WTC11 (cell line): ENCODE measurements at regions of chr18 and their contacts with region 1.

Region 1: DNA sequence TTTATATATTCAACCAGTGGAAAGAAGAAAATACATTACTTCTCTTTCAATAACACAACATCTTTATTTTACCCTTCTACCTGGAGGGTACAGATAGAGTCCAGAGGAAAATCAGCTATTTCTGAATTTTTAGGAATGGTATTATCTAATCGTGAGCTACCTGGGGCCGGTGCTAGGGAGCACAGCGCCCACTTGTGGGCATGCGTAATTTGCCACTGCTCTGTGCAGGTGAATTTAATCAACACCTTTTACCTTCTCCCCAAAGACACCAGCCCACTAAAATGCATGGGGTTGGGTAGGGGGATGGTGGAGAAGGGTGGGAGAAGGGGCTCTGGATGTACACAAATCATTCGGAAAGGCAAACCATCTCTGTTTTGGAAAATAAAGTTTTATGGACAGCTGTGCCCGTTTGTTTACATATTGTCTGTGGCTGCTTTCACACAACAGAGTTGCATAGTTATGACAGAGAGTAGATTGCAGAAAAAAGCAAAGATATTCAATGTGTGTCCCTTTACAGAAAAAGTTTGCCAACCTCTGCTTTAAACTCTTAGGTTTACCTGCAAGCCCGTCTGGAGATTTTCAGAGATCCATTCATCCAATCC is 51.5 kb upstream of the DCC start:
- DNase-seq: peak; percentile 75
- ATAC-seq: peak; percentile 93
- H3K4me3 Mint-ChIP-seq: no peak overlapping the region
- H3K27ac Mint-ChIP-seq: no peak overlapping the region
- H3K4me1 Mint-ChIP-seq: peaks cover 43% of the 10 kb centered on the region
- H3K27me3 Mint-ChIP-seq: no peaks in the 10 kb centered on the region
- CTCF ChIP-seq: peak; percentile 88

Region 2: GRCh38 chr18:51668101-51668500 is 620.4 kb before region 1 on chr18:
- CTCF ChIA-PET with region 1: interaction called, 19 read pairs
- POLR2A ChIA-PET with region 1: no interaction called
- DNase-seq: peak; percentile 76
- ATAC-seq: peak; percentile 85
- H3K4me3 Mint-ChIP-seq: no peak overlapping the region
- H3K27ac Mint-ChIP-seq: no peak overlapping the region
- H3K4me1 Mint-ChIP-seq: peaks cover 17% of the 10 kb centered on the region
- H3K27me3 Mint-ChIP-seq: no peaks in the 10 kb centered on the region
- CTCF ChIP-seq: peak; percentile 71

Region 3: GRCh38 chr18:52341608-52342381 is 53.3 kb after region 1 on chr18:
- CTCF ChIA-PET with region 1: interaction called, 11 read pairs
- POLR2A ChIA-PET with region 1: no interaction called
- DNase-seq: peak; percentile 51
- ATAC-seq: peak; percentile 43
- H3K4me3 Mint-ChIP-seq: no peak overlapping the region
- H3K27ac Mint-ChIP-seq: no peak overlapping the region
- H3K4me1 Mint-ChIP-seq: peaks cover 26% of the 10 kb centered on the region
- H3K27me3 Mint-ChIP-seq: no peaks in the 10 kb centered on the region; the same call in 1 of the 2 replicates
- CTCF ChIP-seq: no peak

Region 4: DNA sequence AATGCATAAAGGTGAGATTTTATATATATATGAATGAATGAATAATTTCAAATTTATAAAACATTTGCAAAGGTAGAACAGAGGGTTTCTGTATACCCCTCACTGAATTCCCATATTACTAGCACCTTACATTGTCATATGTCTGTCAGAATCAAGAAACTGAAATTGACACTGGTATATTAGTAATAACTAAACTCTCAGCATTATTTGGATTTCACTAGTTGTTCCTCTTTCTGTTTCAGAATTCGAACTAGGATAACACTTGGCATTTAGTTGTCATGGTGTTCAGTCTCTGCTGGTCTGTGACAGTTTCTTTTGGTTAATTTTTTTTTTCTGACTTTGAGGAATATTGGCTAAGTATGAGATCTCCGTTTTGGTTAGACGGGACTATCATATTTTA is 327.4 kb after region 1 on chr18:
- CTCF ChIA-PET with region 1: no interaction called
- POLR2A ChIA-PET with region 1: no interaction called
- DNase-seq: no peak
- ATAC-seq: no peak
- H3K4me3 Mint-ChIP-seq: no peak overlapping the region
- H3K27ac Mint-ChIP-seq: no peak overlapping the region
- H3K4me1 Mint-ChIP-seq: peaks cover 5% of the 10 kb centered on the region; the same call in 1 of the 2 replicates
- H3K27me3 Mint-ChIP-seq: no peaks in the 10 kb centered on the region
- CTCF ChIP-seq: no peak

Region 5: GRCh38 chr18:53601344-53601743 is 1312.8 kb after region 1 on chr18:
- CTCF ChIA-PET with region 1: no interaction called
- POLR2A ChIA-PET with region 1: no interaction called
- DNase-seq: no peak
- ATAC-seq: no peak
- H3K4me3 Mint-ChIP-seq: no peak overlapping the region
- H3K27ac Mint-ChIP-seq: no peak overlapping the region
- H3K4me1 Mint-ChIP-seq: no peaks in the 10 kb centered on the region; the same call in 1 of the 2 replicates
- H3K27me3 Mint-ChIP-seq: no peaks in the 10 kb centered on the region
- CTCF ChIP-seq: no peak